Posterior vena cava (tissue), 2 donors: ENCODE measurements at regions of chr13 and their contacts with region 1.

Region 1: GRCh38 chr13:73174501-73175010 is 115.8 kb downstream of the KLF5 start:
- DNase-seq: no peak

Region 2: GRCh38 chr13:73157031-73157430 is 17.5 kb before region 1 on chr13:
- intact Hi-C with region 1: loop called in 1 of 2 experiments (anchors 1 kb)
- DNase-seq: no peak